HEK293T (cell line): ENCODE measurements at regions of chr17 and their contacts with region 1.

Region 1: DNA sequence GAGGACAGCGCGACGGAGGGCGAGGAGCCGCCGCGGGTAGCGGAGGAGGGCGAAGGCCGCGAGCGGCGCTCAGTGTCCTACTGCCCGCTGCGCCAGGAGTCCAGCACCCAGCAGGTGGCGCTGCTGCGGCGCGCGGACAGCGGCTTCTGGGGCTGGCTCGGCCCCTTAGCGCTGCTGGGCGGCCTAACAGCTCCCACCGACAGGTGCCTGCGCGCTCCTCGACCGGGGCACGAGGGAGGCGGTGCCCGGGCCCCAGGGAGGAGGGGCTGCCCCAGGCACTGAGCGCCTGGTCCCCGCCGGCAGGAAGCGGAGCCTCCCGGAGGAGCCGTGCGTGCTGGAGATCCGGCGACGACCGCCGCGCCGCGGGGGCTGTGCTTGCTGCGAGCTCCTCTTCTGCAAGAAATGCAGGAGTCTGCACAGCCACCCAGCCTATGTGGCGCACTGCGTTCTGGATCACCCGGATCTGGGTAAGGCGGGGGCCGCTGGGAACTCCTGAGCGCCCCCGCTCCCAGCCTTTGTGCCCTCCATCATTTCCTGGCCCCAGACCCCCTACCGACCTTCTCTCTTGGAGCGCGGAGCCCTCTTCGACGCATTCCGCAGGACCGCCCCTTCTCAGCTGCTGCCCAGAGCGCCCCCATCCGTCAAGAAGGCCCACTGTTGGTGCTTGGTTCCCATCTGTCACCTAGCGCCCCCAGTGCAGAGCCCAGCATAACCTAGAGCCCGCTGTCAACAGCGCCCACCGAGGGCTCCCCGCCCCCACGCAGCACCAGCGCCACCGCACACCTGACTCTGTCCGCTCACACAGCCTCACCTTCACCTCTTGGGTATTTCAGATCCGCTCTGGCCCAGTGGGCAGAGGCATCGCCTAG is 3.7 kb downstream of the C17orf50 start:
- DNase-seq: peak; percentile 88

Region 2: GRCh38 chr17:35747540-35748017 is 16.8 kb before region 1 on chr17:
- CTCF ChIA-PET with region 1: interaction called, 13 read pairs
- POLR2A ChIA-PET with region 1: interaction called, 3 read pairs
- DNase-seq: peak; percentile 72

Region 3: DNA sequence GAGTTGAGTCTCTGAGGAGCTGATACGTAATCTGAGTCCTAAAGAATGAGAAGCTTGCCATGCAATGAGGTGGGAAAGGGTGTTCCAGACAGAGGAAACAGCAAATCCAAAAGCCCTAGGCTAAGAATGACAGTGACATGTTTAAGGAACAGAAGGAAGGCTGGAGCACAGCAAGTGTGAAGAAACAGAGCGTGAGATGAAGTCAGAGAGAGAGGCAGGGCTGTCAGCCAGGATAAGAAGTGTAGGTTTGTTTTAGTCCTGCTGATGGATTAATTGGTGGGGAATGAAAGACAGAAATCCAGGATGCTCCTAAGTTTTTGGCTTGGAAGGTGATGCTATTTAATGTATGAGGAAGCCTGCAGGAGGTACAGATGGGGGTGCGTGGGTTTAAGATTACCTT is 16.6 kb after region 1 on chr17:
- CTCF ChIA-PET with region 1: interaction called, 17 read pairs
- POLR2A ChIA-PET with region 1: interaction called, 3 read pairs
- DNase-seq: no peak

Region 4: DNA sequence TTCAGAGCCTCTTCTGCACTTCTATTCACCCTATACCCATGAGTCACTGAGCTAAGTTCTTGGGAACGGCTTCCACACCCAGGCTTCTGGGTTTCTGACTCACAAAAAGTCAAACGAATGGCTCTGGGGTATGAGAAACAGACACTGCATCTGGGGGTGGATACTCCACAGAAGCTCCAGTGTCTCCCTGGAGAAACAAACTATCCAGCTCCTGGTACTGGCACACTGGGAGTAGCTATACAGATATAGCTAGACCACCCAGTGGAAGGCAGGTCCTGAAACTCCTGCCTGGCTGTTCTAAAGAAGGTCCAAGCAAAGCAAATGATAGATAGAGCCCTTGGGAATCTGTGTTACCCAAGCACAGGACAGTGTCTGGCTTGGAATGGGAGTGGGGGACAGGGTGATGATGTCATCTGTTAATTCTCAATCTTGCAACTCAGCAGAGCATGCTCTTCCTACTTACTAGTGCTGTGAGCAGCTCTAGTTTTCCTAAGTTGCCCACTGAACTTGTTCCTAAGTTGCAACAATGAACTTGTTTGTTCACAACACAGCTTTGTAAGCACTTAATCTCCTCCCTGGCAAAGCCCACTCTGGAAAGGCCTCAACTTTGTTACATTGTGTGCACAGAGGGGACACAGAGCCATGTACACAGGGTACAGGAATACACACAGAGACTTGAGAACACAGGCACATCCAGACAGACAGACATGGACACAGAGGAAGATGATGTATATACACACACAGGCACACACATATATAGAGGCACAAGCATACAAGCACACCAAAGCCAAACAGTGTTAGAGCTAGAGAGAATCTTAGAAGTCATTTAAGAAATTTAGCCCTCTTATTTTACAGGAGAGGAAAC is 24.4 kb after region 1 on chr17:
- CTCF ChIA-PET with region 1: interaction called, 37 read pairs
- POLR2A ChIA-PET with region 1: interaction called, 7 read pairs
- DNase-seq: no peak

Region 5: DNA sequence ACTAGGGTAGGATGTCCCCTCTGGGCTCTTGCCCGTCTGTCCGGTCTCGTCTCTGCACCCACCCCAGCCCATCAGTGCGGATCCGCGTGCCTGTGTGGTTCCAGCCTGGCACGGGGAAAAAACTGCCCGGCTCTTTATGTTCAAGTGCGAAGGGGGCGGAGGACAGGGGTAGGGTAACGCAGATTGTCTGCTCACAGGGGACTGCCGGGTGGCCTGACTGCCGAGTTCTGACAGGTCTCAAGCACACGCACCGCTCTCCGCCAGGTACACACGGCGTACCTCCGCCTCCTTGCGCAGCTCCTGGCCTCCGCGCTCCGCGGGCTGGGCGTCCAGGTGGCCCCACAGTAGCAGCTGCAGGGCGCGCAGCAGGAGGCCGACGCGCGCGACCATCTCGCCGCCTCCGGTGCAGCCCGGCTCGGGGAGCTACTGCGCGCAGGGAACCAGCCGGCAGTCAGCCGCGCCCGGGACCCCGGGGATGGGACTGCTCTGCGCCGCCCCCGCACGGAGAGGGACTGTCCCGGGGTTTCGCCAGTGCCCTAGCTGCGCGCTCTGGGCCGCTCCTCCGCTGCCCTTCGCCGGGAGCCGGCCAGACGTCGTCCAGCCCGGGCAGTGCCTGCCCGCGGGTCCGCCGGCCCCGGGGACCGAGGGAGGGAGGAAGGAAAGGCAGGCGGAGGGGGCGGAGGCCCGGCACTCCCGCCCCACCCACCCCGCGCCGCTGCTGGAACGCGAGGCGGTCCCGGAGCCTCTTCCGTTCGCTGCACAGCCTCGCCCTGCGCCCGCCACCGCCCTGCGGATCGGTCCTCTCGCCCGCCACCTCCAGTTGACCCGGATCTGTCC is 30.8 kb after region 1 on chr17 and contains the start of gene MMP28:
- CTCF ChIA-PET with region 1: interaction called, 6 read pairs
- POLR2A ChIA-PET with region 1: interaction called, 11 read pairs
- DNase-seq: peak; percentile 33

Region 6: GRCh38 chr17:35816723-35817122 is 52.4 kb after region 1 on chr17:
- CTCF ChIA-PET with region 1: interaction called, 15 read pairs
- POLR2A ChIA-PET with region 1: interaction called, 104 read pairs
- DNase-seq: no peak